Heart left ventricle (tissue), 16 donors: ENCODE measurements at regions of chr6 and their contacts with region 1.

Region 1: DNA sequence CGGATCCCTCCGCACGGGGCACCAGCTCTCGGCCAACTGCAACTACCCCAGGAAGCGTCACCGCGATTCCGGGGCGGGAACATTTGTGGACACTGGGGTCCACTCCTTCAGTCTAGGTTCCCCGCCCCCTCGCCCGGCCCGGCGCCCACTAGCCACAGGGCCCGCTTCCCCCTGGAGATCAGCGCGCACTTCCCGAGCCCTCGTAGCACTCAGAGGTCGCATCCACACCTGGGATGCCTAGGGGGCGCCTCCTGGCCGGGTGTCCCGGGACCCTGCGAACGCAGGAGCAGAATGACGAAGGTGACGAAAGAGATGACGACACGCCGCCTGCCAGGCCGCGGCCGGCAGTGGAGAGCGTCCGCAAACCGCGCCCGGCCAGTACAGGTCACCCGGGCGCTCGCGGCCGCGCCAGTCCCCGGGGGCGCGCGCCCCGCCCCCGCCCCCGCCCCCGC is 309 bp upstream of the AIG1 start:
- DNase-seq: peak; percentile 82 to 88 (median 86)
- ATAC-seq: peak; percentile 70 to 92 (median 88)
- H3K4me3 ChIP-seq: peak overlapping the region; percentile 68 to 96 (median 84)
- H3K27ac ChIP-seq: peak overlapping the region; percentile 73 to 98 (median 93)
- H3K4me1 ChIP-seq: peaks cover 0 to 27% (median 12%) of the 10 kb centered on the region in 12 donors
- H3K27me3 ChIP-seq: no peaks in the 10 kb centered on the region
- CTCF ChIP-seq: peak in 5 of 12 donors; percentile 17 to 40 (median 26)
- POLR2A ChIP-seq: no peak

Region 2: GRCh38 chr6:142952614-142953013 is 107.8 kb before region 1 on chr6:
- intact Hi-C with region 1: loop called in 6 of 10 experiments (anchors 1 to 10 kb)
- DNase-seq: no peak
- ATAC-seq: no peak
- H3K4me3 ChIP-seq: no peak overlapping the region
- H3K27ac ChIP-seq: no peak overlapping the region
- H3K4me1 ChIP-seq: peaks cover 0 to 14% (median 0%) of the 10 kb centered on the region in 12 donors
- H3K27me3 ChIP-seq: no peaks in the 10 kb centered on the region
- CTCF ChIP-seq: no peak
- POLR2A ChIP-seq: no peak

Region 3: GRCh38 chr6:143187238-143187923 is 127.0 kb after region 1 on chr6:
- intact Hi-C with region 1: loop called in 1 of 10 experiments (anchors 10 kb)
- DNase-seq: peak in 4 of 5 donors; percentile 28 to 62 (median 40)
- ATAC-seq: peak in 3 of 4 donors; percentile 69 to 79 (median 78)
- H3K4me3 ChIP-seq: no peak overlapping the region
- H3K27ac ChIP-seq: peak overlapping the region in 9 of 12 donors; percentile 19 to 72 (median 44)
- H3K4me1 ChIP-seq: peaks cover 0 to 26% (median 14%) of the 10 kb centered on the region in 12 donors
- H3K27me3 ChIP-seq: no peaks in the 10 kb centered on the region
- CTCF ChIP-seq: no peak
- POLR2A ChIP-seq: no peak

Region 4: DNA sequence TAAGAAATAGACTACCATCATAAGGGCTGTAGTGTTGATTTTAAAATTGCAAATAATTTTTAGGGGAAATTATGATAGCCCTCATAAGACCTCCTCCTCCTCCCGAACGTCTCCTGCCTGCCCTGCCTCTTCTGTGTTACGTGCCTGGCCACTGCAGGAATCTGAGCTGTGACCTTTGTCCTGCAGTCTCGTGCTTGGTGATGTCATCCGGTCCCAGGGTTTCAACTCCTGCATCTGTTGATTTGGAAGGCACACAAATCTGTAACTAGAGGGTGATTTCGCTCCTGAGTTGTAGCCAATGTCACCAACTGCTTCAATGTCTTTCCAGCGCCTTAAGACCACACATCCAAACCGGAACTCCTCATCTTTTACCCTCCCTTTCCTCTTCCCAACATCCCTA is 163.5 kb after region 1 on chr6:
- intact Hi-C with region 1: loop called in 5 of 10 experiments (anchors 2 to 10 kb)
- DNase-seq: peak in 4 of 5 donors; percentile 65 to 78 (median 71)
- ATAC-seq: peak; percentile 48 to 91 (median 74)
- H3K4me3 ChIP-seq: no peak overlapping the region
- H3K27ac ChIP-seq: peak overlapping the region; percentile 6 to 82 (median 71)
- H3K4me1 ChIP-seq: peaks cover 0 to 40% (median 23%) of the 10 kb centered on the region in 12 donors
- H3K27me3 ChIP-seq: no peaks in the 10 kb centered on the region
- CTCF ChIP-seq: no peak
- POLR2A ChIP-seq: no peak

Region 5: DNA sequence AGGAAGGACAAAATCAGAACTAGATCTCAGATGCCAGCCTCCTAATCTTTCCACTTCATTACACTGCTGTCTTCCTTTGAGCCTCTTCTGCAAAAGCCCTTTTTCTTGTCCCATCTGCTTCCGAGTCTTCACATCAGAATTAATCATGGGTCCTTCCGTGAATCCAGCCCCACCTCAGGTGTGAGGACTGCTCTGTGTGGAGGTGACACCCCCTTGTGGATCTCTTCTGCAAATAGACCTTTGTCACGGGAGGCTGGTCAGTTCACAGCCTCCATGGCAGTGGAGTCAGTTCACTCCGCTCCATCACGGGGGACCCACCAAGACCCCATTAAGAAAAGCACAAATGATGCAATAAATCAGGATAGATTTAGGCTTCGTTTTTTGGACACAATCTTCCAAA is 219.0 kb after region 1 on chr6:
- intact Hi-C with region 1: loop called in 2 of 10 experiments (anchors 10 kb)
- DNase-seq: peak in 1 of 5 donors; percentile 33
- ATAC-seq: peak in 3 of 4 donors; percentile 65 to 89 (median 68)
- H3K4me3 ChIP-seq: no peak overlapping the region
- H3K27ac ChIP-seq: no peak overlapping the region
- H3K4me1 ChIP-seq: peaks cover 0 to 4% (median 0%) of the 10 kb centered on the region in 12 donors
- H3K27me3 ChIP-seq: no peaks in the 10 kb centered on the region
- CTCF ChIP-seq: peak in 8 of 12 donors; percentile 17 to 54 (median 38)
- POLR2A ChIP-seq: no peak